ENCODE measurements at regions of chr6 and their contacts with region 1.

Region 1: DNA sequence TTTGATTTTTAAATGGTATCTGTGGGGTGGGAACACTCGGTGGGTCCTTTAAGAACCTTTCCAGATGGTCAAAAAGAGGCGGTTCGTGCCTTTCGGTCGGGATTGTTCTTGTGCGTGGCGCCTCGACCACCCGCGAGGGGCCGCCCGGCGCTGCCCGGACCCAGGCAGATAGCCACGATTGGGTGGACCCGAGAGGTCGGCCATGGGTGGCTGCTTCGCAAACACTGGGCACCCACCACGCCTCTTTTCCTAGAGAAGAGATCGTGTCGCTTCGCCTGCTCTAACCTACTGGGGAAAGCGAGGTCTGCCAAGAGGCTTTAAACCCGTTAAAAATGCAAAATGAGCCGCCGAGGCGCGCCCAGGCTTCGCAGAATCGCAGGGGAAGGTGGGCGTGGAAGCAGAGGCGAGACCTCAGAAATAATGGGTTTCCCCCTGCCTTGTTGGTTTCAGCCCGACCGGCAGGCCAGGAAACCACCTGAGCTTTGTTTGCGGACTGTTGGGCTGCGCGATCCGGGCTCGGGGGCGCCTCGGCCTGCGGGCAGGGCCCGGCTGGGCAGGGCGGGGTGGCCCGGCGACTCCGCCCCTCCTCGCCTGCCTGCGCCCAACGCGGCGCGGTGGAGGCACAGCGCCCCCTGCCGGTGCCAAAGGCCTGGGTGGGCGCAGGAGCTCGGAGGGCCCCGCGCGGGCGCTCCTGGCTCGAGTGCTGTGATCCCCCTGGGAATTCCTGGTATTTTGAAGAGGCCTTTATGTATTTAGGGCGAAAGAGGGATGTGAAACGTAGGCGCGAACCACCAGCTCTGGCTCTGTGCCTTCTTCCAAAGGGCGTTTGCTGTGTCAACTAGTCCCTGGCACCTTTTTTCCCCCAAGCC is 1.6 kb downstream of the MARCKS start:
- DNase-seq: peak; percentile 85 to 91
- ATAC-seq: peak; percentile 84 to 98 (median 87)
- H3K4me3 ChIP-seq: peak overlapping the region; percentile 70 to 93 (median 76)
- H3K27ac ChIP-seq: peak overlapping the region; percentile 92 to 99 (median 94)
- H3K4me1 ChIP-seq: peaks cover 0 to 55% (median 34%) of the 10 kb centered on the region in 9 donors
- H3K27me3 ChIP-seq: peaks cover 0 to 9% (median 0%) of the 10 kb centered on the region in 7 donors
- CTCF ChIP-seq: peak; percentile 91 to 99 (median 98)

Region 2: GRCh38 chr6:112780498-112781096 is 1078.1 kb before region 1 on chr6:
- intact Hi-C with region 1: loop called in 8 of 10 experiments (anchors 1 to 10 kb)
- DNase-seq: peak; percentile 20 to 83
- ATAC-seq: peak in 7 of 8 donors; percentile 81 to 96 (median 91)
- H3K4me3 ChIP-seq: no peak overlapping the region
- H3K27ac ChIP-seq: no peak overlapping the region
- H3K4me1 ChIP-seq: peaks cover 0 to 5% (median 0%) of the 10 kb centered on the region in 9 donors
- H3K27me3 ChIP-seq: no peaks in the 10 kb centered on the region
- CTCF ChIP-seq: peak; percentile 76 to 94 (median 86)

Region 3: GRCh38 chr6:113306552-113307145 is 552.1 kb before region 1 on chr6:
- intact Hi-C with region 1: loop called in 7 of 10 experiments (anchors 1 to 10 kb)
- DNase-seq: peak; percentile 37 to 40
- ATAC-seq: peak in 6 of 8 donors; percentile 33 to 89 (median 69)
- H3K4me3 ChIP-seq: no peak overlapping the region
- H3K27ac ChIP-seq: no peak overlapping the region
- H3K4me1 ChIP-seq: no peaks in the 10 kb centered on the region
- H3K27me3 ChIP-seq: no peaks in the 10 kb centered on the region
- CTCF ChIP-seq: peak in 7 of 9 donors; percentile 40 to 74 (median 63)

Region 4: GRCh38 chr6:113405339-113406047 is 453.2 kb before region 1 on chr6:
- intact Hi-C with region 1: loop called in 4 of 10 experiments (anchors 5 to 10 kb)
- DNase-seq: no peak
- ATAC-seq: no peak
- H3K4me3 ChIP-seq: no peak overlapping the region
- H3K27ac ChIP-seq: no peak overlapping the region
- H3K4me1 ChIP-seq: peaks cover 0 to 5% (median 0%) of the 10 kb centered on the region in 9 donors
- H3K27me3 ChIP-seq: no peaks in the 10 kb centered on the region
- CTCF ChIP-seq: no peak

Region 5: DNA sequence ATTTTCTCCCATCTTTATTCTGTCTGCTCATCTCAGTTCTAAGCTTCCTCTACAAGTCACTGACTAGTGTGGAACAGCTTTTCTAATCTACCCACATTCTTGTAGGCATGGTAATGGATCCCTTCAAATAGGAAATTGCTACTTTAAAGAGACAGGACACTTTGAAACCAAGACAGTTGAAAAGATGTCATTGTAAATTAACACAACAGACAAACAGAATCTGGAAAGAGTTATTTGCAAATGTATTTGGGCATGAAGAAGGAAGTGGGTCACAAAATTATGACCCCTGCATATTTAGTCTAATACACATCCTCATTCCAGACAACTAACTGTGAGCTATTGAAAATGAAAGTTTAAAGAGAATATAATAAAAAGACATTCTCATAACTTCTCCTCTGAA is 299.7 kb before region 1 on chr6:
- intact Hi-C with region 1: loop called in 9 of 10 experiments (anchors 2 to 10 kb)
- DNase-seq: no peak
- ATAC-seq: peak in 1 of 8 donors; percentile 33
- H3K4me3 ChIP-seq: no peak overlapping the region
- H3K27ac ChIP-seq: peak overlapping the region in 1 of 10 donors; percentile 13
- H3K4me1 ChIP-seq: peaks cover 0 to 15% (median 9%) of the 10 kb centered on the region in 9 donors
- H3K27me3 ChIP-seq: no peaks in the 10 kb centered on the region
- CTCF ChIP-seq: no peak

Region 6: GRCh38 chr6:113662688-113663333 is 195.9 kb before region 1 on chr6:
- intact Hi-C with region 1: loop called in 1 of 10 experiments (anchors 10 kb)
- DNase-seq: no peak
- ATAC-seq: no peak
- H3K4me3 ChIP-seq: no peak overlapping the region
- H3K27ac ChIP-seq: peak overlapping the region in 1 of 10 donors; percentile 15
- H3K4me1 ChIP-seq: peaks cover 0 to 23% (median 14%) of the 10 kb centered on the region in 9 donors
- H3K27me3 ChIP-seq: no peaks in the 10 kb centered on the region
- CTCF ChIP-seq: no peak

Region 7: DNA sequence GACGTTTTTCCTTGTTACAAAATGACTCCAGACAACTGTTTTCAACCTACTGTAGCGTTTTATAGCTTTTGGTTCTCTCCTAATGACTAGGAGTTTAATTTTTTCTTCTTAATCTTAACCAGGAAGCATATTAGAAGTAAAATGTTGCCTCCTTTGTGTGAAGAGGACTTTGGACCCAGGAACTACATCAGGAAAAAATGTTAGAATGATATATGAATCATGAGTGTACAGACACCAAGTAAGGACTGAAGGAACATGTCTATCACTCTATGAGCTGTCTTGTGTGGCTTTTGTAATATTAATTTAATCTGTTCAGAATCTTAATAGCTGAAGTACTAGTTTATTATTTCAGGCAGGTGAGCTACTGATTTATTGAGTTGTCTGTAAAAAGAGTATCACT is 72.5 kb before region 1 on chr6:
- intact Hi-C with region 1: no loop called
- DNase-seq: no peak
- ATAC-seq: no peak
- H3K4me3 ChIP-seq: no peak overlapping the region
- H3K27ac ChIP-seq: no peak overlapping the region
- H3K4me1 ChIP-seq: no peaks in the 10 kb centered on the region
- H3K27me3 ChIP-seq: no peaks in the 10 kb centered on the region
- CTCF ChIP-seq: no peak

Region 8: GRCh38 chr6:113805173-113805790 is 53.4 kb before region 1 on chr6:
- intact Hi-C with region 1: no loop called
- DNase-seq: no peak
- ATAC-seq: peak in 1 of 8 donors; percentile 55
- H3K4me3 ChIP-seq: no peak overlapping the region
- H3K27ac ChIP-seq: peak overlapping the region in 9 of 10 donors; percentile 23 to 83 (median 44)
- H3K4me1 ChIP-seq: peaks cover 0 to 51% (median 0%) of the 10 kb centered on the region in 9 donors
- H3K27me3 ChIP-seq: no peaks in the 10 kb centered on the region
- CTCF ChIP-seq: no peak

Region 9: DNA sequence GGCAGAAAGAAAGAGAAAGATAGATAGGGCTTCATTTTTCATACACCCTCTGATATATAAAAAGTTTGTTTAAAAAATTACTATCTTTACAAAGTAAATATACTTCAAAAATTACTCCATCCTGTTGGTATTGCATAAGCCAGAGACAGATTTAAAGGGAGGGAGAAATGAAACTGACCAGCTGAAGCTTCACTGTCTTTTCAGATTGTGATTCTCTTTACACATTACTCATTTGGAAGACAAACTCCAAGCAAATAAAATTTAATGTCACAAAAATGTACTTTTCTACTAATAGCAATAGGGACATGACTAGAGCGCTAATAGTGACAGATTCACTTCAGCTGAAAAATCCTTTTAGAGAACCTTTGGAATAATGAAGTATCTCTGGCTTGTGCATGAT is 40.1 kb before region 1 on chr6:
- intact Hi-C with region 1: no loop called
- DNase-seq: no peak
- ATAC-seq: no peak
- H3K4me3 ChIP-seq: no peak overlapping the region
- H3K27ac ChIP-seq: peak overlapping the region in 3 of 10 donors; percentile 4 to 24 (median 9)
- H3K4me1 ChIP-seq: peaks cover 0 to 17% (median 0%) of the 10 kb centered on the region in 9 donors
- H3K27me3 ChIP-seq: no peaks in the 10 kb centered on the region
- CTCF ChIP-seq: no peak

Region 10: DNA sequence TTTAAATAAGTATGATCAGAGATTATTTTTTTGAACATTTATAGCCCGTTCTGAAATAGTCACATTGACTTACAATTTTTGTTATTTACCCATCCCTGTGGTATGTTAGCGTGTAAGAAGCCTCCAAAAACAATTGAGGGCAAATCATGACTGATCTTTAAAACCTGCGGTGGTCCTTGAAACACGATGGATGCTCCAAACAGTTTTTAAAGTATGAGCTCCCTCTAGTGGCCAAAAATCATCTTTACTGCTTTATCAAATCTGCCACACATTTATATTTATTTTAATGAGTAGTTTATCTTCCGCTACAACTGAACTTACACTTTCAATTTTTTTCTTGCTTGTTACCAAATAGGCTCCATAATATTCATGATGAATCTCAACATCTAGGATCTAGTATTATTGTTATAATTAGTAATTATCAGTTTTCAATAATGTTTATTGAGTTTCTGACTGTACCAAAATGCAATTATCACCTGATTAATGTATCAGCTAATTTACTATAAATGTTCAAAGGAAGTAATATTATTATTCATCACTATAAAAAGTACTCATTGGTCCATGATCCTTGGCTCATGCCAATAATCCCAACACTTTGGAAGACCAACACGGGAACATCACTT is 50.6 kb after region 1 on chr6:
- intact Hi-C with region 1: loop called in 2 of 10 experiments (anchors 5 kb)
- DNase-seq: peak in 1 of 2 donors; percentile 26
- ATAC-seq: peak in 1 of 8 donors; percentile 43
- H3K4me3 ChIP-seq: no peak overlapping the region
- H3K27ac ChIP-seq: no peak overlapping the region
- H3K4me1 ChIP-seq: peaks cover 0 to 18% (median 4%) of the 10 kb centered on the region in 9 donors
- H3K27me3 ChIP-seq: no peaks in the 10 kb centered on the region
- CTCF ChIP-seq: peak; percentile 62 to 85 (median 75)

Measured in heart right ventricle (tissue), 16 donors.